ENCODE measurements at regions of chr5 and their contacts with region 1.

Region 1: GRCh38 chr5:20231040-20231439 is 243.0 kb upstream of the CDH18 start:
- DNase-seq: no peak
- H3K4me3 ChIP-seq: no peak overlapping the region
- H3K4me3 Mint-ChIP-seq: no peak overlapping the region
- H3K27ac Mint-ChIP-seq: no peak overlapping the region
- H3K4me1 ChIP-seq: no peaks in the 10 kb centered on the region
- H3K4me1 Mint-ChIP-seq: no peaks in the 10 kb centered on the region
- H3K27me3 ChIP-seq: no peaks in the 10 kb centered on the region
- H3K27me3 Mint-ChIP-seq: no peaks in the 10 kb centered on the region
- CTCF ChIP-seq: no peak

Region 2: GRCh38 chr5:19795218-19795617 is 435.8 kb before region 1 on chr5:
- CTCF ChIA-PET with region 1: no interaction called
- POLR2A ChIA-PET with region 1: no interaction called
- intact Hi-C with region 1: loop called (anchors 1 kb)
- DNase-seq: peak in 1 of 2 experiments; percentile 25
- H3K4me3 ChIP-seq: no peak overlapping the region
- H3K4me3 Mint-ChIP-seq: no peak overlapping the region
- H3K27ac Mint-ChIP-seq: no peak overlapping the region
- H3K4me1 ChIP-seq: no peaks in the 10 kb centered on the region
- H3K4me1 Mint-ChIP-seq: no peaks in the 10 kb centered on the region
- H3K27me3 ChIP-seq: no peaks in the 10 kb centered on the region
- H3K27me3 Mint-ChIP-seq: no peaks in the 10 kb centered on the region
- CTCF ChIP-seq: peak in 1 of 2 experiments; percentile 38